Activated CD4-positive, alpha-beta T cell treated with anti-CD3 and anti-CD28 coated beads, Interleukin-2, amount 10 ng/mL, durations not matched to agents 7 days and 5 days (primary cell): ENCODE measurements at regions of chr3 and their contacts with region 1.

Region 1: DNA sequence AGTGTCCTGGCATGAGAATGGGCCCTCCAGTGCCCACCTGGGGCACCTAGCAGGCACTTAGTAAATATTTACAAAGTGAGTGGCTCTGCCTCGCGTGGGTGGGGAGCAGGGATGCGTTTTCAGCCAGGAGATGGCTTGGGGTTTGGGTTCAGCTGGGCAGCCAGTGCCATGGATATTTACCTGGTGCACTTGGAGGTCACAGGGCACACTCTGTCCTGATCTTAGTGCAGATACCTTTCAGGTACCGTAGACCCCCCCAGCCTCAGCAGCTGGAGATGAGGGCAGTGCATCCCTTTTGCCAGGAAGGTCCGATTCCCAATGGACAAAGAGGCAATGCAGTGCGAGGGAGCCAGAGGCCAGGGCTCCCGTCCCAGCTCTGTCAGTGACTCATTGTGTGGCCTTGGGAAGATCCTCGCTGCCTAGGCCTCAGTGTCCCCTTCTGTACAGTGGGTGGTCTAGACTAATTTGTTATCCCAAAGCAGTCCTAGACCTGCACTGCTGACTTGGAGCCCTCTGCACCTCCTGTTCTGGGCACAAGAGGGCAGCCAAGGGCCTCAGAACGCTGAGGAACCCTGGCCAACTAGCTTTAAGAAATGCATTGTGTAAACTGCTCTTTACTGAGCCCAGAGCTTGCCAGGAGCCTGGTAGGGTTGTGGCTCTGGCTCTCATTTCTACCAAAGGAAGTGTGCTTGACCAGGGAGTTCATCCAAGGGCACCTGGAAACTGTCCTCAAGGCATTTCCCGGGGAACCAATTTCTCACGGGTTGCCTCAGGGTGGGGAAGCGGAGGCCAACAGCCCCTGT is 16.0 kb downstream of the HDAC11 start:
- DNase-seq: peak; percentile 76
- H3K4me3 Mint-ChIP-seq: no peak overlapping the region
- H3K27ac Mint-ChIP-seq: no peak overlapping the region
- H3K4me1 Mint-ChIP-seq: peaks cover 7% of the 10 kb centered on the region
- H3K27me3 Mint-ChIP-seq: no peaks in the 10 kb centered on the region

Region 2: DNA sequence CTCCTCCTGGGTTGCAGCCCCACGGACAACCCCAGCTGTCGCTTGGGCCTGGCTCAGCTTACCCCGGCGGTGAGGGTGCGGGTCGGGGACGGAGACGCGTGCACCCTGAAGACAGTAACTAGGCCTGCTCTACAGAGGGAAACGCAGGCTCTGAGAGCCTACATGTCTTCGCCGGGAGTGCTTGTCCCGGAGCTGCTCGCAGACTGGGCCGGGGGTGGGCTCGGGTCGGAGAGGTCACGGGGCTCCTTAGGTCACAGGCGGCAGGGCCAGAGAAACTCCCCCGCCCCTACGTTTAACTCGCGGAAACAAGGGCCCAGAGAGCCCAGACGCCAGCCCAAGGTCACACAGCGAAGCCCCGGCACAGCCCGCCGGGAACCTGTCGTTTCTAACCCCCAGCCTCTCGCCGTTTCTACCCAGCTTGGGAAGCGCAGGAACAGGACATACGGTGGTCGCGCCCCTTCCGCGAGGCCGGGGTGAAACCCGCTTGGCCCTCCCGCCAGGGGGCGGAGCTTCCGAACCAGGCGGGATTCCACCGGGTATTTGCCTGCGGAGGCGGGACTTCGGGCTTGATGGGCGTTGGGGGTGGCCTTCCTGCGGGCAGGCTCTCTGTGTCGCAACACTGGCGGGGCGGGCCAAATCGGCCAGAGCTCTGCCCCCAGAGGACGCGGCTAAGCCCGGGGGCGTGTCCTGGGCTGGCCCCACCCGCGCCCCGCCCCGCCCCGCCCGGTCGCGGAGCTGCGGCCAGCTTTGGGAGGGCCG is 16.4 kb before region 1 on chr3 and contains the start of gene HDAC11:
- CTCF ChIA-PET with region 1: interaction called, 21 read pairs
- POLR2A ChIA-PET with region 1: no interaction called
- DNase-seq: peak; percentile 99
- H3K4me3 Mint-ChIP-seq: peak within 1 kb of the TSS; percentile 90
- H3K27ac Mint-ChIP-seq: peak within 1 kb of the TSS; percentile 92
- H3K4me1 Mint-ChIP-seq: peaks cover 14% of the 10 kb centered on the region
- H3K27me3 Mint-ChIP-seq: peaks cover 2% of the 10 kb centered on the region
- total RNA-seq, gene HDAC11: 1.6 to 2.3 TPM

Region 3: DNA sequence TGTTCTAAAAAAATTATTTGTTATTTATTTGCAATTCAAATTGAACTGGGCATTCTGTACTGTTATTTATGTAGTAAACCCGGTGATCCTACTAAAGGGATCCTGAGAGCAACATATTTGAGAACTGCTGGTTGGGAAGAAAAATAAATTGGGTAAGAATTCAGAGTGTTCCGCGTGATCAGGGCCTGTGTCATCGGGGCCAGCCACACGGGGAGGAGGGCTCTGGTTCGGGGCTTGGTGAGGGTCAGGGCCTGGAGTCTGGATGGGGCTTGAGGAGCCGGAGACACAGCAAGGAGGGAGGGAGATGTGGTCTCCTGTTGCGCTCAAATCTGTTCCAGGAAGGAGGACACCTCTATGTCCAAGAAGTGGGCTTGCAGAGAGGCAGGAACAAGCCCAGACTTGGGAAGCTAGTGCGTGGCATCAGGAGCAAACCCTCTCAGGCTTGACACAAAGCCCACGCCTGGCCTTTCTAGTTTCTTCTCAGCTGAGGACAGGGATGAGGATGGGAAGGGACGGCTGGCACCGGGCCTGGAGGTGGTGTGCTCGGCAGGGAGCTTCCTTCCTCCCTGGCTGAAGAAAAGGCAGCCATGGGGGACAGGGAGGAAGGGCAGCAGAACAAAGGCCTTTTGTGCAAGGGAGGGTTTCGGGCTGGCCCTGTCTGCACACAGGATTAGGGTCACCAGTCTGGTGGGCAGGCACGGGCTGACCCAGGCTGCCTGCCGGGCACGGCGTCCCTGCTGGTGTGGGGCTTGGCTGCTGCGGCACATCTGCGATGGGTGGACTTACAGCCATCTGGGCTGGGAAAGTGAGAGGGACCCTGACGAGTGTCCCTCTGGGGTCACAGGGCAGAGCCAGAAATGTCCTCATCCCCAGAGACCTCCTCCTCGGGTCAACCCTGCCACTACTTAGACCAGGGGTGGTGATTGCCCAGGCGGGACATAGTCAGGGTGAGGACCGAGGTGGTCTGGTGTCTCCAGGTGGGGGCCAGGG is 30.0 kb after region 1 on chr3:
- CTCF ChIA-PET with region 1: no interaction called
- POLR2A ChIA-PET with region 1: no interaction called
- DNase-seq: no peak
- H3K4me3 Mint-ChIP-seq: no peak overlapping the region
- H3K27ac Mint-ChIP-seq: no peak overlapping the region
- H3K4me1 Mint-ChIP-seq: no peaks in the 10 kb centered on the region
- H3K27me3 Mint-ChIP-seq: peaks cover 12% of the 10 kb centered on the region

Region 4: DNA sequence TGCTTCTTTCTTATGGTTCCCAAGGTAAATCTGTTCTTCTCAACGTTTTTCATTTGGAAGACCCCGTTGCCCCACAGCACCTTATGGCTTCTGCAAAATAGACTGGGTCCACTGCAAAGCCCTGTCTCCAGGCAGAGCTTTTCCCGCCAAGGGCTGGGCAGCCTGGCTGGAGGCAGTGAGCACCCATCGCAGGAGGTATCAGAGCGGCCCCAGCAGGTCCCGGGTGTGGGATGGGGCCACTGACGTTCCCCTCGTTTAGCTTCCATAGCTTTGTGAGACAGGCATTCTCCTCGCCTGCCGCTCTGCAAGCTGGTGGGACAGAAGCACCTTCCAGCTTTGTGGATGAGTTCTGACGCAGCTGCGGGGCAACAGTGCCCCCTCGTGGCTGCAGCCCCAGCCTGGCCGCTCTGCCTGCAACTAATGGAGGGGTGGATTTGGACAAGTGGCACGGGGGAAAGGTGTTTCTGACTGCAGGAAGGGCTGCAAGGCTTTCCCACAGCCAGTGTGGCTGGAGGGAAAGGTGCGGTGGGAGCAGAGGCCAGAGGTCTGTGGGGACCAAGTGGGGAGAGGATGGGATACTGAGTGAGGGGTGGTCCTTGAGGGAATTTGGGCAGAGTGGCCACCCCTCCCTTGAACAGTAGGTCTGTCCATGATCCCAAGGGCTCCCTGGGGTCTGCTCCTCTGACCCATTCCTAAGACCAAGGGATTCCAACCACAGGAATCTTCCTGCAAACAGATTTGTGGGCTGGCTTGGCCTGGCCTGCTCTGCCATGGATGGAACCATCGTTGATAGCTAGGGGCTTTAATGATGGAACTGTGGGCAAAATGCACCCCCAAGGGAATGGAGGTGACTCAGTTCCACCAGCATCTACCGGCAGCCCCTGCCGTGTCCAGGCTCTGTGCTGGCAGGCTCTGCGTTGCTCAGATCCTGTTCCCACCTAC is 152.2 kb after region 1 on chr3:
- CTCF ChIA-PET with region 1: interaction called, 49 read pairs
- POLR2A ChIA-PET with region 1: no interaction called
- DNase-seq: peak; percentile 79
- H3K4me3 Mint-ChIP-seq: no peak overlapping the region
- H3K27ac Mint-ChIP-seq: no peak overlapping the region
- H3K4me1 Mint-ChIP-seq: peaks cover 37% of the 10 kb centered on the region
- H3K27me3 Mint-ChIP-seq: peaks cover 40% of the 10 kb centered on the region

Region 5: GRCh38 chr3:13657660-13658435 is 161.7 kb after region 1 on chr3:
- CTCF ChIA-PET with region 1: interaction called, 17 read pairs
- POLR2A ChIA-PET with region 1: no interaction called
- DNase-seq: peak; percentile 70
- H3K4me3 Mint-ChIP-seq: no peak overlapping the region
- H3K27ac Mint-ChIP-seq: no peak overlapping the region
- H3K4me1 Mint-ChIP-seq: peaks cover 22% of the 10 kb centered on the region
- H3K27me3 Mint-ChIP-seq: peaks cover 26% of the 10 kb centered on the region